Right ventricle myocardium superior (tissue), 1 donor: ENCODE measurements at regions of chr4 and their contacts with region 1.

Region 1: DNA sequence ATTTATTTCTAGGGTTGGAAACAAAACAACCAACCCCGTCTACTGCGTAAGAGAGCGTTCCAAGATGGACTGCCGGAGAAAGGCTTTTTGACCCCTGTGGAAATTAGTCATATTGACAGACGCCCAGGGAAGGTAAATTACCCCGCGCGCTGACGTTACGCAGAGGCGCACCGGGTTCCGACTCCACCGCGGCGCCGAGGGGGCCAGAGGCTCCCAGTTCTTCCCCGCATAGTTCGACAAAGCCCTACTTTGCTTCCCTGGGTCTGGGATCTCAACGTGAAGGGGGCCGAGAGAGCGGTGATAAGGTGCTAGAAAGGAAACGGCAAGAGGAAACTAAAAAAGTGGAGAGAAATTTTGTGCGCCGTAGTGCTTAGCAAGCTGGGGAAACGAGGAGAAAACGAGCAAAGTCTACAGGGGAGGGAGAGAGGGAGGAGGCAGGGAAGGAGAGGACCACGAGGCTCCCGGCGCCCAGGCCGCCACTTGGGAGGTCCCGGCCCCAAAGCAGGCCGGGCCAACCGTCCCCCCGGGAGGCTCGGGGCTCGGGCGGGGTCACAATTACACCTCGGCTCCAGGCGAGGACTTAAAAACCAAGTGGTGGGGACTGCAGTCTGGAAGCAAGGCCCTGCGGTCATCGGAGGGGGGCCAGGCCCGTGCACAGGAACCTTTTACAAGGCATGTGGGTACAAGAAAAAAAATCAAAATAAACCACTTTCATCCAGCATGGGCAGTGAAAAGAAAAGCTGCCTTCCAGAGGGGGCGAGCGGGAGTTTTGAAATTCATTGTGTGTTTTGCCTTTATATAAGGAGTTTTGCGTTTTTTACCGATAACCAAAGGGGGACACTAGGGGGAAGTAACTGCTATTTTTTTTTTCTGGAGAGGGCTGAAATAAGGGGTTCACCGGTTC is 13.2 kb downstream of the HAND2 start:
- DNase-seq: no peak
- ATAC-seq: peak; percentile 11

Region 2: DNA sequence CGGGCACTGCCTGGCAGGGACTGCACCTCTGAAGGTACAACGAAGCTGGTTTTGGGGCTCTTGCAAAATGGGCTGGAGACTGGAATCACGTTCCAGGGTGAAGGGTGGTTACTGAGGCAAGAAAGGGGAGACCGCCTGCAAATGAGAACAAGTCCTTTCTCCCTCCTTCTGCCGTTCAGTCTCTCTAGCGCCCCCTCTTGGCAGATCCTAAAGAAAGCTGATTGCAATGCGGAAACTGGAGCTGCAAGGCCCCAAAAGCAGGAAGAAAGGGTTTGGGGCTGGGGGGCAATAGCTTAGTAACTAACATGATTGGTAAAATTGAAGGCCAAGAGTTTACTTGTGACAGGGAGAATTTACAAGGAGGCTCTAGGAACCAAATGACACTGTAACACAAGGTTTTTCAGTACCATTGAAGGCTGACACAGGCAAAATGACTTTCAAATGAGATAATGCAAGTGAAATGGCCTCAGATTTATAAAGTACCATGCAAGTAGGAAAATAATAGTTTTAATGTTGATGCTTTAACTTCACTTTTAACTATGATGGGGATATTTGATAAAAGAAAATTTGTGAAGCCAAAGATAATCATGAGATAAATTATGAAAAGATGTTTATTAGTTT is 235.8 kb after region 1 on chr4:
- intact Hi-C with region 1: loop called (anchors 5 kb)
- DNase-seq: no peak
- ATAC-seq: no peak

Region 3: DNA sequence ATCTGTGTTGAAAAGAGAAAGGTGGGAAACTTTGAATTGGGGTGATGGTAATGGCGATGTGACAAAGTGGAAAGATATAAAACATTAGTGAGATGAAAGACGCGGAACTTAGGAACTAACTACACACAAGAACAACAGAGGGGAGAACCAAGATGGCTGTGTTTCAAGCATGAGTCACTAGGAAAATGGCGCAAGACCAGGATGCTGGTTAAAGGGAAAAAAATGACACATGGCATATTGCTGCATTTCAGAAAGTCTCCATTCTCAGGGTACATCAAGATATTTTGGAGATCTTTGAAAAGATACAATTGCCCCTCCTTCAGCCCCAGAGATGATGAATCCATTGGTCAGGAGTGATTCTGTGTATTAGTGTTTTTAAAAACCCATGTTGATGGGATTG is 602.2 kb after region 1 on chr4:
- intact Hi-C with region 1: no loop called
- DNase-seq: no peak
- ATAC-seq: no peak